Astrocyte of the cerebellum (primary cell): ENCODE measurements at regions of chr1 and their contacts with region 1.

Region 1: DNA sequence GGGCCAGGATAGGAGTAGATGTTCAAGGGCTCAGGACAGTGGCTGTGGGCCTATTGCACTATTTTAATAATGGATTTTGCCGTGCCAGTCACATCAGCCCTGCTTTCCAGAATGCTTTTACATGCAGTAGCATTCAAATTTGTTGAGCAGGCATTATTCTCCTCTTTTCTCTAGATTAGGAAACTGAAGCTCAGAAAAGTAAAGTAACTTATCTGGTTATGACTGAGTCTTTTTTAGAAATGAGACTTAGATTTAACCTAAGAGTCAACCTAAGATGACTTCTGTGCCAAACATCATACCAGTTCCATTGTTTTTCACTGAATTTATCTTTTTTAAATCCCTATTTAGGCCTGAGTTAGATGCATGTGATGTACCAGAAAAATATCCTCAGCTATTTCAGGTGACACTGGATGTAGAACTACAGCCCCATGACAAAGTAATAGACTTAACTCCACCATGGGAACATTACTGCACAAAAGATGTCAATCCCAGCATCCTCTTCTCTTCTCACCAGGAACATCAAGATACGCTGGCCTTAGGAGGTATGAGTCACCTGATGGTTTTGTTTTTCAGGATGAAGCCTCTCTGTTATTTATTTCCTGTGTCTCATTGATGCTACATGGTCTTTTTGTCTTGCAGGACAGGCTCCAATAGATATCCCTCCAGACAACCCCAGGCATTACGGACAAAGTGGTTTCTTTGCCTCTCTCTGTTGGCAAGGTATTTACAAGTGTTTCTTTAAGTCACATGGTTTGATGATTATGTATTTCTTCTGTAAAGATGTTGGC is 31.4 kb upstream of the LEPR start:
- DNase-seq: no peak
- H3K4me3 ChIP-seq: no peak overlapping the region
- CTCF ChIP-seq: no peak

Region 2: DNA sequence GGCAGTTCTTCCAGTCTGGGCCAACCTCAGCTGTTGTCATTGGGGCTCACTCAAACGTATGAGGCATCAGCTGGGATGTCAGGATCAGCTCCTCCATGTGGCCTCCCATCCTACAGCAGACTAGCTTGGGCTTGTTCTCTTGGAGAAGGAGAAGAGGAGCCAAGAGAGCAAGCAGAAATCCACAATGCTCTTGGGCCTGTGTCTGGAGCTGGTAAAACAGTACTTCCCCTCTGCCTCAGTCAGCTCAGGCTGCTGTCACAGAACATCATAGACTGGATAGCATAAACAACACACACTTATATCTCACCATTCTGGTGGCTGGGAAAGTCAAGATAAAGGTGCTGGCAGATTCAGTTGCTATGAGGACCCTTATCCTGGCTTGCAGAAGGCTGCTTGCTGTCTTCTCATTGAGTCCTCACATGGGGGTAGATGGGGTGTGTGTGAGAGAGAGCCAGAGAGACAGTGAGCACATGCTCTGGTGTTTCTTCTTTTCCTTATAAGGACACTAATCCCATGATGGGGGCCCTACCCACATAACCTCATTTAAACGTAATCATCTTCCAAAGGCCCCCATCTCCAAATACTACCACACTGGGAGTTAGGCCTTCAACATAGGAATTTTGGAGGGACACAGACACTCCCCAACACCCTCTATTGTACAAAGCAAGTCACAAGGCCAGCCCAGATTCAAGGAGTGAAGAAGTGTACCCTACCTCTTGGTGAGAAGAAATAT is 96.1 kb before region 1 on chr1:
- in situ Hi-C with region 1: no loop called
- DNase-seq: no peak
- H3K4me3 ChIP-seq: no peak overlapping the region
- CTCF ChIP-seq: no peak

Region 3: DNA sequence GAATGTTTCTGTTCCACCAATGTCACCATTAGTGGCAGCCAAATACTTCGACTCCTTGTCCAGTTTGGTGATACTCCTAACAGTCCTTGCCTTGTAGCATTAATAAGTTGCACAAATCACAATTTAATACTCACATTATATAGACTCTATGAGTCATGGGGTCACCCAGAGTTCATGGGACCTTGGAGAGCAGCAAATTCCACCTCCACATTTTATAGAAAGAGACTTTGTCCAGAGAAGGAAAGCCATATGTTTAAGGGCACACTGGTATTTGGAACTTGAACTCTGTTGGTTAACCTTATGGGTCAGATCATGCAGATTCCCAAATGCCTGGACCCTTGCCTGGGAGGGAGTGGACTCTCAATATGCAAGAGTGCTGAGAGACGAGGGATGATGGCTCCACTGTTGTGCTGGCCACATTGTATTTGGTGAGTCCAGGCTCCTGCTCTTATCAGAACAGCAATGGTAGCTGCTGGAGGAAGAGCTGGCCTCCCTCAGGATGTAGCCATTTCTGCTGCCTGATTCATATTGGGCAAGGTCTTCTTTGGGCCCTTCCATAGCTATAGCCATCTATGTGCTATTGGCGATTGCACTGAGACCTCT is 49.1 kb before region 1 on chr1:
- in situ Hi-C with region 1: no loop called
- DNase-seq: peak; percentile 11
- H3K4me3 ChIP-seq: no peak overlapping the region
- CTCF ChIP-seq: no peak

Region 4: DNA sequence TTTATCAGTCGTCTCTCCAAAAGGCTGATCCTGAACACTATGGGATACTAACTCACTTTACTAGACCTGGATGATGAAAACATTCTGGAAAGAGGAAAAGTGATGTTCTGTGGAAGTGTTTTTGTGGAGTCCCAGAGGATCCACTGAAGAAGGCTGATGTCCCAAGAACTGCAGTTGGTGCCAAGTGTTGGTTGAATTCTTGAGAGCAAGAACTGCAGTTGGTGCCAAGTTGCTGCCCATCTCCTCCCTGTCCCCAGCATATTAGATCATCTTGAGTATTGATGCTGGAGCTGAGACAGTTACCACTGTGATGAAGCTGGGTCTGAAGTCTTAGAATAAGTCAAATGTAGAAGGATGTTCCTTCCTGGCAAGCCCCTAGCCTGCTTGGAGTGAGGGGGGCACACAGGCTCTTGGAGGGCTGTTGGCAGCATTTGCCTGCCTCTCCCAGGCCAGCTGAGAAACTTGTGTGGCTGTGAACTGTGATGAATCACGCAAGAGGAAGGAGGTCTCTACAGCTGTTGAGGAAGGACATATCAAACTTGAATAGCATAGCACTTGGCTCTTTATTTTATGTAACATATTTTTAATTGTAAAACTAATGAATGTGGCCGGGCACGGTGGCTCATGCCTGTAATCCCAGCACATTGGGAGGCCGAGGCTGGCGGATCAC is 31.7 kb before region 1 on chr1:
- in situ Hi-C with region 1: loop called (anchors 5 kb)
- DNase-seq: no peak
- H3K4me3 ChIP-seq: no peak overlapping the region
- CTCF ChIP-seq: no peak